Head of caudate nucleus (tissue), 42 donors: ENCODE measurements at regions of chr7 and their contacts with region 1.

Region 1: GRCh38 chr7:104156842-104157277 is 51.0 kb downstream of the ORC5 start:
- DNase-seq: no peak

Region 2: GRCh38 chr7:103524042-103524907 is 632.6 kb before region 1 on chr7:
- intact Hi-C with region 1: loop called (anchors 10 kb)
- DNase-seq: peak in 34 of 42 donors; percentile 19 to 71 (median 44)

Region 3: DNA sequence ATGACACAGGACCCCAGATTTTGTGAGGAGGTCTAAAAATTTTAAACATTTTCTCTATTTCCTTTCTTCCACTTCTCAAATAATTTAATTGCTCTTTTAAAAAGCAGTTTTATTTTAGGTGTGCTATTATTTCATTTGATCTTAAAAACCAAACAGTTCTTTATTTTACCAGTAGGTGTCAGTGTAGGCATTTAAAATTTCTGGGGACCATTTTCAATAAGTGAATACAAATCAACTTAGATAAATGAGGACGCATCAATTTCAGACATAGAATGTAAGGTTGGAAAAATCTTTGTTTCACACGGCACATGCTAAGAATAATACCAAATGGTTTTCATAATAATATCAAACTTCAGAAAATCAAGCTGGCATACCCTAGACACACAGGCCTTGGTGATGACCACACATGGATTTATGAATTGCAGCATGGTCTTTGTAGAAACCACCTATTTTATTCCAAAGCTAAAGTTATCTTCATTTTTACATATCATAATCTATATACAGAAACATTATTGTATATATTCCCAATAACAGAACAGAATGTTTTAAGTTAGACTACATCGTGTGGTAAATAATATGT is 583.3 kb before region 1 on chr7:
- intact Hi-C with region 1: loop called (anchors 2 kb)
- DNase-seq: no peak

Region 4: DNA sequence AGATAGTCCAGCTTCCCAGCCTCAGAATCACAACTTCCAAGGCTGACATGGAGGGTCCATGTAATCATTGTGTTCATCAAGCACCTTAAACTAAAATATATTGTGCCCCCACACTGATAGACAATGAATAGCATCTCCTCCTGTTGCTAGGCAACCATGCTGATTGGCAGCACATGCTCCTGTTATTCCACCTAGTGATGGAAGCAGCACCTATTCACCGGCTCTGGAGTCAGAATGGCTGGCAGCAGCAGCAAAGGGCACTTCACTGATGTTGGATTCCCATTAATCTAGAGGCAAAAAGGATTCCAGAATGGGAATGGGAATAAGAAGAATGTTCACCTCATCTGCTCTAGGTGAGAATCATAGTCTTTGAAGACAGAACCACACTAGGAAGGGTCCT is 222.4 kb before region 1 on chr7:
- intact Hi-C with region 1: no loop called
- DNase-seq: peak; percentile 6 to 88 (median 52)